ENCODE measurements at regions of chrX and their contacts with region 1.

Region 1: DNA sequence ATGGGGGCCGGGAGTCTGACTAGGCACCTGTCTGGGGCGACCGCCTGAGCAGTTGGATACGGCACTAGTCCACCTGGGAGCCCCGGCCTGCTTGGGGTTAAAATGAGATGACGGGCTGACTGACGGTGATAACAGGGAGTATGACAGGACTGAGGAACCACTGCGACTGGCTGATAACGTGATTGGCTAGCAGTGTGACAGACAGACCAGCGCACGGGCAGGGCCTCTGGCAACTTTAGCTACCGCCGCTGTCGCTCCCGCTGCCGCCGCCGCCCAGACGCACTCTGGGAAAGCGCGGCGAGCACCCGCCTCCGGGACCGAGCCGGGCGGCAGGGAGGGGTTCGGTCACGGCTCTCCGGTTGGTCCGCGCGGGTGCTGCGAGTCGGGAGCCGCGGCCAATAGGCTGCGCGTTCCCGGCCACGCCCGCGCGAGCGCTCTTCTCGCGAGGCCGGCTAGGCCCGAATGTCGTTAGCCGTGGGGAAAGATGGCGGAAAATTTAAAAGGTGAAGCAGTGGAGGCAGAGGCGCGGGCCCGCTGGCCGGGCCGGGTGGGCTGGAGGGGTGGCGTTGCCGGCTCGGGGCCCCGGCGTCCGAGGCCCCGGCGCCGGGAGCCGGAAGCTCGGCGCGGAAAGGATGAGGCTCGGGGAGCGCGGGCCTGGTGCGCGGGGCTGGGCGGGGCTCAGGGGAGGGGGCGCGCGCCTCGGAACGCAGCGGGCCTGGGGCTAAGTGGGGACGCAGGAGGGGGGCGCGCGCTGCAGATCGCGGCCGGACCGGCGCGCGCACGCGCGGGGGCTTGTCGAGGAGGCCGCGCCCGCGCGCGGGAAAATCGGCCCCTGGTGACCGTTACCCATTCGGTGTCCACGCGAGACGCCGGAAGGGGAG is at the start of gene SUV39H1:
- DNase-seq: peak; percentile 94
- total RNA-seq, gene SUV39H1: 2.5 TPM

Region 2: GRCh38 chrX:48574270-48575266 is 122.0 kb before region 1 on chrX and contains the start of gene RBM3:
- intact Hi-C with region 1: loop called (anchors 1 kb)
- DNase-seq: peak; percentile 95
- total RNA-seq, gene RBM3: 96.9 TPM

Region 3: DNA sequence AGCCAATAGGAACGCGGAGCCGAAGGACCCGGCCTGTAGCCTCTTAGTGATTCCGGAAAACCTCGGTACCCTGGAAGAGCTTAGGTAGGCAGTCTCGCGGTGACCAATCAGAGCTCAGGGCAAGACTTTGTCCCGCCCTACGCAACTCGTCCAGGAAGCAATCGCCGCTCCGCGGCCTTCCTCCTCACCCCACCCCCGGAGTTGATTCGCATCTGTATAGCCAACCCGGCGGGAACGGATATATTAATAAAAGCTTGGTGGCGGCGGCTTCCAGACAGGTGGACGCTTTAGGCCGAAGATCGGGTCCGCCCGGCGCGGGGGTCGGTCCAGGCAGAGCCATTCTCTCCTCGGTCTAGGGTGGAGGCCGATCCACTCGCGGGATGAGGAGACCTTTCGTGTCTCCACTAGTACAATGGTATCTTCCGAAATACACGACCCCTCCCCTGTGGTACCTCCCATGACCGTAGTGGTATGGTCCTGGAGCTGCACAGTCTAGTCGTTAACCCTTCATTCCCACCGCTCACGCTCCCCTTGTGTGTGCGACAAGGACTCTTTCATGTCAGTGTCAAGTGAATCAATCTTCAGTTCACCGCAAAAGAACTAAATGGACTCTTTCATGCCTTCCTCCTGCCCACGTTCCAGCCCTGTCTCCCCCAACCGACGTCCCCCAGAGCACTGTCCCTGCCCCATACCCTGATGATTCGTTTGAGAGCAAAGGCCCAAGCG is 40.8 kb after region 1 on chrX:
- intact Hi-C with region 1: loop called (anchors 2 kb)
- DNase-seq: peak; percentile 94

Region 4: GRCh38 chrX:48782795-48783194 is 86.3 kb after region 1 on chrX:
- intact Hi-C with region 1: no loop called
- DNase-seq: no peak

Measured in cardiac septum (tissue), 1 donor.